Right ventricle myocardium inferior (tissue), 1 donor: ENCODE measurements at regions of chr7 and their contacts with region 1.

Region 1: DNA sequence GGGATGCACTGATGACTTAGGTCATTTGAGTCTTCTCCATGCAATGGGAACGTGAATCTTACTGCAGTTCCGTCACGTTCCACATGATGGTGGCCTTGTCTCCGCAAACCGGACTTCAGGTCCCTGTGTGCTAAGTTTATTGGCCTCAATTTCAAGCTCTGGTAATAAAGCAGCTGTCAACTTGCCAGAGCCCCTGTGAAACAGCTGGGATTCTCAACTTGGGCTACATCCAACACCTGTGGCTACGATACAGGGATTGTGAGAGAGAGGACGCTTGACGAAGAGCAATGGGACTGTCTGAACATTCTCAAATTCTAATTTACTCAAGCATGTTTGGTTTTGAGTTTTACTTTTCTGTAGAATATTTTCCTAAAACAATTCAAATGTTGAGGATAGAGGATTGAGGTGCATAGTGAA is 174.2 kb downstream of the PTN start:
- DNase-seq: peak; percentile 40
- ATAC-seq: peak; percentile 80

Region 2: GRCh38 chr7:137328373-137329120 is 159.3 kb after region 1 on chr7:
- intact Hi-C with region 1: no loop called
- DNase-seq: no peak
- ATAC-seq: peak; percentile 39

Region 3: GRCh38 chr7:137454246-137454724 is 285.0 kb after region 1 on chr7:
- intact Hi-C with region 1: loop called (anchors 5 kb)
- DNase-seq: no peak
- ATAC-seq: peak; percentile 59

Region 4: DNA sequence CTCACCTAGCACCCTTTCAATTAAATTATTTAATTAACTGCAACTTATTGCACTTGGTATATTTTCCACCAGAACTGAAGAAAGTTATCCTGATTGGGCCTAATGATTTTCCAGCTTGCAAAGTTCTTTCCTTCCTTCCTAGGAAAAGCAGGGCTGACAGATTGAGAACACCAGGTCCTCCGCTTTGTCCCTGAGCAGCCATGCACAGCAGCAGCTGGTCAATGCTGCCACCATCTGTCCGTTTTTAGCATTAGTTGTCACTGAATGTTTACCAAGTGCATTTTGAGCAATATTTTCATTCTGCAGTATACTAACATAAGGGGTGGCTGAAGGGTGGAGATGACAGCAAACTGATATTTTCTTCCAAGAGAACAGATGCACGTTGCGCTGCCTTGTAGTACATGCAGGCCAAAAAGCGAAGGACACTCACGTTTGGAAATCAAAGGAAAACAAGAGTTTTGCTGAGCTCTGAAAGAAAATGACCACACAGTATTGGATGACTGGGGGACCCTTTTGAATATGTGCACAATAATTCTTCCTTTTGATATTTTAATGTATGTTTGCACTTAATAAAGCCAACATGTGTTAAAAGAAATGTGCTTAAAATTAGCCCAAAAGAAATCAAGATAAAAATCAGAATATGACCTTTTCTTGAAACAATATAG is 423.1 kb after region 1 on chr7:
- intact Hi-C with region 1: loop called (anchors 2 kb)
- DNase-seq: no peak
- ATAC-seq: peak; percentile 93